ENCODE measurements at regions of chr12 and their contacts with region 1.

Region 1: GRCh38 chr12:5428332-5429221 is 3.3 kb upstream of the NTF3 start:
- DNase-seq: no peak
- H3K4me3 ChIP-seq: no peak overlapping the region
- H3K27ac ChIP-seq: no peak overlapping the region
- H3K4me1 ChIP-seq: peaks cover 7% of the 10 kb centered on the region
- H3K27me3 ChIP-seq: peaks cover 33% of the 10 kb centered on the region
- CTCF ChIP-seq: peak; percentile 5 to 39

Region 2: DNA sequence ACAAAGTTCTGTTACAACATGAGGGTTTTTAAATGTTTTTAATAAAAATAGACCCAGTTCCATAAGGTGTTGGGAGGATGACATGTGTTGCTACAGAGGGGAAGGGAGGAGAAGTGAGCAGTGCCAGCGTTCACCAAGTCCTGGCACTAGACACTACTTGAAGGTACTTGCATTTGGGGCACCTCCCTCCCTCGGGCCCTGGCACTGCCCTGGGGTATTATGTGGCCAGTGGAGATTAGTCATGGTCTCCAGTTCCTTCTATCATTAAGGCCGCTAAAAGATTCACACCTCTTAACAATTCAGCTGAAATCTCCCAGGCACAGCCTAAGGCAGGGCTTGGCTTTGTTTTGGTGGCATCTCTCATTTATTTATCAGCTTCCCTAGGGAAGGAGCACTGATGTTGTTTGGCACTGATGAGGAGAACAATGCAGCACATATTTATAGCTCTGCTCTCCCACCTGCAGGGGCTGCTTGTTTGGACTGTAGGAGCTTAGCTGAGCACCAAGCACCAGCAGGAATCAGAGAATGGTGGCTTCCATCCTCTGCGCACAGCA is 152.2 kb before region 1 on chr12:
- CTCF ChIA-PET with region 1: no interaction called
- dilution Hi-C with region 1: no loop called
- in situ Hi-C with region 1: no loop called
- intact Hi-C with region 1: no loop called
- DNase-seq: peak; percentile 33
- H3K4me3 ChIP-seq: no peak overlapping the region
- H3K27ac ChIP-seq: no peak overlapping the region
- H3K4me1 ChIP-seq: peaks cover 2% of the 10 kb centered on the region
- H3K27me3 ChIP-seq: no peaks in the 10 kb centered on the region
- CTCF ChIP-seq: no peak

Region 3: GRCh38 chr12:5648692-5649359 is 220.2 kb after region 1 on chr12:
- CTCF ChIA-PET with region 1: no interaction called
- dilution Hi-C with region 1: no loop called
- in situ Hi-C with region 1: no loop called
- intact Hi-C with region 1: loop called (anchors 2 kb)
- DNase-seq: no peak
- H3K4me3 ChIP-seq: no peak overlapping the region
- H3K27ac ChIP-seq: no peak overlapping the region
- H3K4me1 ChIP-seq: no peaks in the 10 kb centered on the region
- H3K27me3 ChIP-seq: no peaks in the 10 kb centered on the region
- CTCF ChIP-seq: peak; percentile 26 to 47